Activated CD8-positive, alpha-beta memory T cell treated with anti-CD3 and anti-CD28 coated beads, Interleukin-2, amount 10 ng/mL, durations not matched to agents 7 days and 5 days (primary cell): ENCODE measurements at regions of chr1 and their contacts with region 1.

Region 1: GRCh38 chr1:185663332-185663731 is 70.9 kb upstream of the HMCN1 start:
- DNase-seq: no peak
- ATAC-seq: peak; percentile 27
- H3K4me3 Mint-ChIP-seq: no peak overlapping the region
- H3K27ac Mint-ChIP-seq: peak overlapping the region; percentile 52
- H3K4me1 Mint-ChIP-seq: peaks cover 24% of the 10 kb centered on the region
- H3K27me3 Mint-ChIP-seq: no peaks in the 10 kb centered on the region

Region 2: DNA sequence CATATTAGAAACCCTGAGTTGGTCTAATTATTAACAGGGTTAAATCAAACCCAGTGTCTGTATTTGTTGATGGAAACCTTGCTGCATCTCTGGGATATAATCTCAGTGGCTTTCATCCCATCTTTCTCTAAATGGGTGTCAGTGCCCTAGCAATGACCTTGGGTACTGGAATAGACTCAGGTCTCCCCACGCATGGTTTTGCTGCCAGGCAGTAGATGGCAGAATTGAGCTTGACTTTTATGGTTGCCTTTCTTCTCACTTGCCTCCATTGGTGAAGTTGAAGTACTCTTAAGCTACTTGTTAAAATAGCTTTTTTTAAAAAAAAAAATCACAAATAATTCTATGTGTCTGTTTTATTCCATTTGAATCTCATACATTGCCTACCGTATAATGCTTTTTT is 11.0 kb before region 1 on chr1:
- CTCF ChIA-PET with region 1: interaction called, 11 read pairs
- DNase-seq: no peak
- ATAC-seq: no peak
- H3K4me3 Mint-ChIP-seq: no peak overlapping the region
- H3K27ac Mint-ChIP-seq: no peak overlapping the region
- H3K4me1 Mint-ChIP-seq: peaks cover 9% of the 10 kb centered on the region
- H3K27me3 Mint-ChIP-seq: no peaks in the 10 kb centered on the region